Left colon (tissue), 2 donors: ENCODE measurements at regions of chr22 and their contacts with region 1.

Region 1: GRCh38 chr22:20016734-20017621 is at the start of gene ARVCF:
- DNase-seq: peak; percentile 90 to 93
- ATAC-seq: peak; percentile 68
- total RNA-seq, gene ARVCF: 12.2 to 13.0 TPM

Region 2: GRCh38 chr22:19962233-19962908 is 54.6 kb before region 1 on chr22:
- intact Hi-C with region 1: loop called in 1 of 2 experiments (anchors 10 kb)
- DNase-seq: peak; percentile 89 to 90
- ATAC-seq: peak; percentile 79